PC-3 (cell line): ENCODE measurements at regions of chr3 and their contacts with region 1.

Region 1: DNA sequence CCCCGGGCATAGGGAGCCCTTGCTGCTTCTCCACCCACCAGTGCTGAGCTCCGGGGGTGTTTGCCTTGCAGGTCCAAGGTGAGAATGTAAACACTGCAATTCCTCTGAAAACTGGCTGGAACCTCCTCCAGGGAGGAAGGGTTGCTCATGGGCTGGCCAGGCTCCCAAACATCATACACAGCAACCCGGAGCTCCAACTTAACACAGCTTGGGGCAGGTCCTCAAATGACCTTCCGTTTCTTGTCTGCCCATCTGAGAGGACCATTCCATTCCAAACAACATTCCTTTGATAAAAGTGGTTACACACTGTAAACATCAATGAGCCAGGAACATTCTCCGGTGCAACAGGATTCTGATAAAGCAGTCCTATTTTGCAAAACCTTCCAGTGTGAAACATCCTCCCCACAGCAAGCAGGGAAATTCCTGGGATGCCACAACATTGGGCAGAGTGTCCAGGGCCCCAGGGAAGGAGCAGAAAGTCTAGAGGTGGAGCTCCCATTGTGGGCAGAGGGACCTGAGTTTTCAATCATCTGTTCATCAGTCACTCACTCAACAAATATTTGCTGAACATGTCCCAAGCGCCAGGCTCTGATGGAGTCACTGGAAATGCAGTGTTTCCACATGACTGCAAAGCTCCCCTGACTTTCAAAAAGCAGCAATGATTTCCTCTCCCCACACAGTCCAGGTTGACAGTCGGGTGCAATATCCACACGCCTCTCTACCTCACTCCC is 7.3 kb upstream of the HEG1 start:
- DNase-seq: peak; percentile 94
- ATAC-seq: peak; percentile 92
- H3K4me3 ChIP-seq: peak overlapping the region; percentile 39; the same call in 1 of the 2 replicates
- H3K27ac ChIP-seq: peak overlapping the region; percentile 84
- H3K4me1 ChIP-seq: peaks cover 41% of the 10 kb centered on the region
- H3K27me3 ChIP-seq: no peaks in the 10 kb centered on the region
- CTCF ChIP-seq: no peak

Region 2: DNA sequence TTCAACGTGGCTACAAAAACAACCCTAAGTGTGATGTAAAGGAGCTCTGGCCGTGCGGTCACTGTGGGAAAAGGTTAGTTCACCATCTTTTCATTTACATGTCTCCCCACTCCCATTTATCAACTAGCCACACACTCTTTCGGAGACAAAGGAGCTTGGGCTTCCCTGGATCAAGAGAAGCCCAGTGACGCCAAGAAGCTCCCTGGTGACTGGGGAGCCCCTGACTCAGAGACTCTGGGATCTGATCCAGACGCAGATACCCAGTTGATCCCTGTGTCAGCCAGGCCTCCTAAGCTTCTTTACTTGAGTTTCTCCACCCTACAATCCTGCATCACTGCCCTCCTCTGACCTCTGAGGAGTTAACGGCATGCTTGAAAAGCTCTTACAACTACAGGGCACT is 51.1 kb before region 1 on chr3:
- CTCF ChIA-PET with region 1: no interaction called
- POLR2A ChIA-PET with region 1: no interaction called
- intact Hi-C with region 1: loop called (anchors 2 kb)
- DNase-seq: no peak
- ATAC-seq: no peak
- H3K4me3 ChIP-seq: no peak overlapping the region
- H3K27ac ChIP-seq: no peak overlapping the region
- H3K4me1 ChIP-seq: peaks cover 13% of the 10 kb centered on the region
- H3K27me3 ChIP-seq: no peaks in the 10 kb centered on the region
- CTCF ChIP-seq: no peak

Region 3: GRCh38 chr3:125107861-125108567 is 45.0 kb after region 1 on chr3:
- CTCF ChIA-PET with region 1: no interaction called
- POLR2A ChIA-PET with region 1: no interaction called
- intact Hi-C with region 1: loop called (anchors 1 kb)
- DNase-seq: peak; percentile 69
- ATAC-seq: peak; percentile 78
- H3K4me3 ChIP-seq: no peak overlapping the region
- H3K27ac ChIP-seq: peak overlapping the region; percentile 76
- H3K4me1 ChIP-seq: peaks cover 34% of the 10 kb centered on the region
- H3K27me3 ChIP-seq: no peaks in the 10 kb centered on the region
- CTCF ChIP-seq: no peak